ENCODE measurements at regions of chr17 and their contacts with region 1.

Region 1: DNA sequence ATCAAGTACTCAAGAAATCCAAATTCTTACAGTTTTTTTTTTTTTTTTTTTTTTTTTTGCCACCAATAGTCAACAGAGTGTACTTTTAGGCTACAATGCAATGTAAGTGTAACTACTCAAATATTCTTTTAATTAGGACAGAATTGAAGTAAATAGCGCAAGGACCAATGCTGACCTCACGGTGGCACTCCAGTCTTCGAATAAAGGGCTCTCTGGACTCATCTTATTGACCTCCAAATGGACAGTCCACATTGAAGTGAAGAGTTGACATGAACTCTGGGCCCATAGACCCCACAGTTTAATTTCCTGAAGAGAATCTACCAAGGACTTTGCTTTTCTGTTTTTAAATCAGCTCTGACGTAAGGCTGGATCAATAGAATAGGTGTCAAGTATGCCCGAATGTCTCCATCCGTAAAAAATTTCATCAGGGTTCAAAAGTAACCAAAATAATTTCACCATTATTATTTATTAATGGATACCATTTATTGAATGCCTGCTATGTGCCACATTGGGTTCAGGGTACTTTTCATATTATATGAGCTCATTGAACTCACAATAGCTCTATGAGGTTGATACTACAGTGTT is 7.3 kb upstream of the DDX52 start:
- DNase-seq: peak; percentile 59
- ATAC-seq: peak; percentile 75
- H3K4me3 ChIP-seq: no peak overlapping the region
- H3K27ac ChIP-seq: no peak overlapping the region
- H3K4me1 ChIP-seq: peaks cover 9% of the 10 kb centered on the region; the same call in 1 of the 2 replicates
- H3K27me3 ChIP-seq: no peaks in the 10 kb centered on the region
- CTCF ChIP-seq: peak; percentile 71
- POLR2A ChIP-seq: no peak
- RAD21 ChIP-seq: peak; percentile 80

Region 2: GRCh38 chr17:37555386-37555785 is 95.1 kb before region 1 on chr17:
- CTCF ChIA-PET with region 1: interaction called, 12 read pairs
- POLR2A ChIA-PET with region 1: no interaction called
- dilution Hi-C with region 1: no loop called
- in situ Hi-C with region 1: no loop called
- intact Hi-C with region 1: no loop called
- DNase-seq: no peak
- ATAC-seq: no peak
- H3K4me3 ChIP-seq: no peak overlapping the region
- H3K27ac ChIP-seq: no peak overlapping the region
- H3K4me1 ChIP-seq: 0 out of 2 replicates have a peak, but pooled peaks cover 2% of the 10 kb centered on the region
- H3K27me3 ChIP-seq: no peaks in the 10 kb centered on the region
- CTCF ChIP-seq: no peak
- POLR2A ChIP-seq: no peak
- RAD21 ChIP-seq: no peak

Region 3: GRCh38 chr17:37661400-37662014 is 11.0 kb after region 1 on chr17:
- CTCF ChIA-PET with region 1: interaction called, 10 read pairs
- POLR2A ChIA-PET with region 1: no interaction called
- dilution Hi-C with region 1: no loop called
- in situ Hi-C with region 1: no loop called
- intact Hi-C with region 1: no loop called
- DNase-seq: no peak
- ATAC-seq: no peak
- H3K4me3 ChIP-seq: no peak overlapping the region
- H3K27ac ChIP-seq: no peak overlapping the region
- H3K4me1 ChIP-seq: no peaks in the 10 kb centered on the region
- H3K27me3 ChIP-seq: no peaks in the 10 kb centered on the region
- CTCF ChIP-seq: no peak; the same call in 1 of the 2 replicates
- POLR2A ChIP-seq: no peak
- RAD21 ChIP-seq: no peak

Region 4: DNA sequence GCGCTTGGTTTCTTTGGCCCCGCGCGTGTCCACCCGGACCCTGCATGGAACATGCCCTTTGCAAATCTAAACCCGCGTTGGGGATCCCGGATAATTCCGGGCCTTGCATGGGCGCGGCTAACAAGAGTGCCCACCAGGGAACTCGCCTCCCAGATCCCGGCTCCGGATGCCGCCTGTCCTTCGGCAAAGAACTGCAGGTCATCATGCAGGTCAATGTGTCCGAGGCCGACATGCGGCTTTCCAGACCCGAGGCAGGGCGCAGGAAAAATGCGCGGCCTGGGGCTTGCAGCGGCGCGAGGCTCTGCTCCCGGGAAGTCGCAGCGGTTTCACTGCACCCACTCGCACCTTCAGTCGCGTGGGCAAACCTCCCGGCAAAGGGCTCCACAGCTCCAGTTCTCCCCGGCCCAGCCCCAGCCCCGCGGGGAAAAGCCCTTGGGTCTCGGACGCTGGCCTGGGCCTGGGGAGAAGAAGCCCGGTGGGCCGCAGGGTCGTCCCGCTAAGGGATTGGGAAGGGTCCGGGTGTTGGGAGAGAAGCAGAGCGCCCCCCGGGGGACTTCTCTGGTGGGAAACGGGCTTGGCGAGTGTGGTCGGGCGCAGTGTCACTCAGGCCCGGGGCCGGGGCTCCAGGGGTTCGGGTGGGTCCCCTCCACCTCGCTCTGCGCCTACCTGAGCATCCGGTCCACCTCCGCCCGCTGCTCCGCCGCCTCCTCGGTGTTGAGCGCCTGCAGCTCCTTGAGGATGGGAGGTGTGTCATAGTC is 93.5 kb after region 1 on chr17:
- CTCF ChIA-PET with region 1: interaction called, 6 read pairs
- POLR2A ChIA-PET with region 1: interaction called, 10 read pairs
- dilution Hi-C with region 1: no loop called
- in situ Hi-C with region 1: no loop called
- intact Hi-C with region 1: no loop called
- DNase-seq: no peak
- ATAC-seq: no peak
- H3K4me3 ChIP-seq: no peak overlapping the region
- H3K27ac ChIP-seq: no peak overlapping the region
- H3K4me1 ChIP-seq: peaks cover 2% of the 10 kb centered on the region; the same call in 1 of the 2 replicates
- H3K27me3 ChIP-seq: peaks cover 87% of the 10 kb centered on the region
- CTCF ChIP-seq: no peak
- POLR2A ChIP-seq: no peak
- RAD21 ChIP-seq: no peak

Region 5: DNA sequence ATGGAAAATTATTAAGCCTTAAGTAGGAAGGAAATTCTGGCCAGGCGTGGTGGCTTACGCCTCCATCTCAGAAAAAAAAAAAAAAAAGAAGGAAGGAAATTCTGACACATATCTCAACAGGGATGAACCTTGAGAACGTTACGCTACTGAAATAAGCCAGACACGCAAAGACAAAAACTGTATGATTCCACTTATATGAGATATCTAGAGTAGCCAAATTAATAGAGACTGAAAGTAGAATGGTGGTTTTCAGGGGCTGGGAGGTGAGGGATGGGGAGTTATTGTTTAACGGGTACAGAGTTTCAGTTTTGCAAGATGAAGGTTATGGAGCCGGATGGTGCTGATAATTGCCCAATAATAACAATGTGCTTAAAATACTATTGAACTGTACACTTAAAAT is 110.5 kb after region 1 on chr17:
- CTCF ChIA-PET with region 1: interaction called, 6 read pairs
- POLR2A ChIA-PET with region 1: no interaction called
- dilution Hi-C with region 1: no loop called
- in situ Hi-C with region 1: loop called (anchors 10 kb)
- intact Hi-C with region 1: no loop called
- DNase-seq: no peak
- ATAC-seq: no peak
- H3K4me3 ChIP-seq: no peak overlapping the region
- H3K27ac ChIP-seq: no peak overlapping the region
- H3K4me1 ChIP-seq: no peaks in the 10 kb centered on the region
- H3K27me3 ChIP-seq: peaks cover 12% of the 10 kb centered on the region
- CTCF ChIP-seq: no peak
- POLR2A ChIP-seq: no peak
- RAD21 ChIP-seq: no peak

Region 6: GRCh38 chr17:37770631-37771518 is 120.4 kb after region 1 on chr17:
- CTCF ChIA-PET with region 1: interaction called, 11 read pairs
- POLR2A ChIA-PET with region 1: no interaction called
- dilution Hi-C with region 1: no loop called
- in situ Hi-C with region 1: loop called (anchors 10 kb)
- intact Hi-C with region 1: loop called (anchors 1 kb)
- DNase-seq: peak; percentile 62
- ATAC-seq: peak; percentile 92
- H3K4me3 ChIP-seq: no peak overlapping the region
- H3K27ac ChIP-seq: no peak overlapping the region
- H3K4me1 ChIP-seq: 0 out of 2 replicates have a peak, but pooled peaks cover 2% of the 10 kb centered on the region
- H3K27me3 ChIP-seq: no peaks in the 10 kb centered on the region
- CTCF ChIP-seq: peak; percentile 80
- POLR2A ChIP-seq: no peak
- RAD21 ChIP-seq: peak; percentile 85

Region 7: GRCh38 chr17:37818689-37819088 is 168.2 kb after region 1 on chr17:
- CTCF ChIA-PET with region 1: interaction called, 18 read pairs
- POLR2A ChIA-PET with region 1: interaction called, 18 read pairs
- dilution Hi-C with region 1: no loop called
- in situ Hi-C with region 1: loop called (anchors 5 kb)
- intact Hi-C with region 1: loop called (anchors 1 kb)
- DNase-seq: peak; percentile 89
- ATAC-seq: no peak
- H3K4me3 ChIP-seq: no peak overlapping the region
- H3K27ac ChIP-seq: no peak overlapping the region
- H3K4me1 ChIP-seq: peaks cover 4% of the 10 kb centered on the region
- H3K27me3 ChIP-seq: no peaks in the 10 kb centered on the region
- CTCF ChIP-seq: no peak
- POLR2A ChIP-seq: no peak
- RAD21 ChIP-seq: no peak

Measured in IMR-90 (cell line).